ENCODE measurements at regions of chr10 and their contacts with region 1.

Region 1: DNA sequence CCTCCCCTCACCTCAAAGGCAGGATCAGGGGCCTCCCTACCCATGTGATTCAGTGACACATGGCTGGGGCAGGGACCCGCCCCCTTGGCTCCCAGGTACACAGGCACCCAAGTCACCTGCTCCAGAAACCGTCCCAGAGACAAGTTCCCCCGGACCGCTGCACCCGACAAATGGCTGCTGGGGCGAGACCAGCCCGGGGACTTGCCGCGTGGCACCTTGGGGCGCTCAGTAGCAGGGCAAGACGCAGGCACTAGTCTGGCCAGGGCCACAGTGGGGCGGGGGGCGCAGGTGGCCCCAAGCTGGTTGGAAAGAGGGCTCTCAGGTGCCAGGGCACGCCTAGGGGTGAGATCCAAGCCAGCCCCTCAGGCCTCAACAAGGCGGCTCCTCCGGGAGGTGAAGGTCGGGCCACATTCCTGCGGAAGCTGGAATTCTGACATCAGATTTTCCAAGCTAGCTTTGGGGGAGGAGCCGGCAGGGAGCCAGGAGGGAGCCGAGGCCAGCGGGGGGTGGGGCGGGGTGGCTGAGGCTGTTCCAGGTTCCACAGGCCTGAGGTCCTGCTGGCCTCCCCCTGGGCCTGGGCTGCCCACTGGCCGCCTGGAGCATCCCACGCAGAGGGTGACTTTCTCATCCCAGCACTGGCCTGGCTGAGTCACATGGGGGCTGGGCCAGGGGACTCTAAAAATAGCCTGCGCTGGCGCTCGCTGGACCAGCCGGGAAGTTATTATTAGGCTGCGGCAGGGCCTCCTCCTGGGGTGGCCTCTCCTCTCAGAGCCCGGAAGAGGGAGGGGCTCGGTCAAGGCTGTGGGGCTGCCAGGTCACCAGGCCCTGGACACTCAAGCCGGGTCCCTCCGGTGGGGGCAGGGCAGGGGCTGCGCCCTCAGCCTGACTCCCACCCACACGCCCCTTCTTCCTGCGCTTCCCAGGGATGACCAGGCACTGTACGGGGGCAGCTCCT is 20.5 kb upstream of the INPP5A start:
- DNase-seq: peak; percentile 47 to 82
- H3K4me3 ChIP-seq: peak overlapping the region; percentile 45 to 73 (median 57); a peak in 7 of 8 replicates
- H3K27ac ChIP-seq: peak overlapping the region; percentile 66; the same call in 1 of the 2 replicates
- H3K4me1 ChIP-seq: peaks cover 11 to 34% (median 24%) of the 10 kb centered on the region in 4 experiments
- H3K27me3 ChIP-seq: peaks cover 4 to 30% (median 15%) of the 10 kb centered on the region in 4 experiments; a peak in 6 of 7 replicates
- CTCF ChIP-seq: no peak
- EP300 ChIP-seq: peak in 1 of 2 experiments; percentile 39; a peak in 1 of 3 replicates
- POLR2A ChIP-seq: peak in 1 of 2 experiments; percentile 41; a peak in 1 of 3 replicates
- RAD21 ChIP-seq: no peak

Region 2: DNA sequence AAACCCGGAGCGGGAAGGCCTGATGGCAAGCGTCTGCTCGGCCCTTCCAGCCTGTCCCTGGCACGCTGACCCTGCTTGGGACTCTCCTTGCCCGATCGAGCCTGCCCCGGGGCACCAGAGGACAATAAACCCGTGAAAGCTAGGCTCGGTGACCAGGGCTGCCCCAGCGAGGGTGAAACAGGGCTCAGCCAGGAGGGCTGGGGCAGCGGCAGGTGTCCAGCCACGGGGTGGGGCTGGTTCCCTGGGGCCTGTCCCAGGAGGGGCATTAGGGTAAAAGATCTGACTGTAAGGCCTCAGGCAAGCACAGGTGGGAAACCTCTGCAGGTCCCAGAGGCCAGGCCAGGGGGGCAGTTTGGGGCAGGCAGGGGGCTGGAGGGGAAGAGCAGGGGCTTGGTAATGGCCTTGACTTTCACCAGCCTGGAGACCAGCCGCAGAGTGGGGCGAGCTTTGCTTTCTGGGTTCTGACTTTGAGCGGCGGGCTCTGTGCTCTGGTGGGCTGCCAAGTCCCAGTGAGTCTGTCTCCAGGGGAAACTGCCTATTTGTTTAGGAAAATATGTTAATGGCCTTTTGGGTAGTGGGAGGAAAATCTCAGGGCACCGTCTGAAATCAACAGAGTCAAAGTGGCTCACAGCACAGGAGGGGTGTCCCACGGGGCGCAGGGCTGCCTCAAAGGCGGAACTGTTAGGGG is 47.7 kb before region 1 on chr10:
- CTCF ChIA-PET with region 1: interaction called, 4 read pairs
- POLR2A ChIA-PET with region 1: interaction called, 14 read pairs
- DNase-seq: no peak
- H3K4me3 ChIP-seq: no peak overlapping the region
- H3K27ac ChIP-seq: no peak overlapping the region
- H3K4me1 ChIP-seq: peaks cover 0 to 14% (median 8%) of the 10 kb centered on the region in 4 experiments; a peak in 6 of 7 replicates
- H3K27me3 ChIP-seq: no peaks in the 10 kb centered on the region; a peak in 3 of 7 replicates
- CTCF ChIP-seq: no peak
- EP300 ChIP-seq: no peak
- POLR2A ChIP-seq: no peak
- RAD21 ChIP-seq: no peak

Region 3: GRCh38 chr10:132762267-132762666 is 245.2 kb after region 1 on chr10:
- CTCF ChIA-PET with region 1: no interaction called
- POLR2A ChIA-PET with region 1: no interaction called
- DNase-seq: no peak
- H3K4me3 ChIP-seq: no peak overlapping the region
- H3K27ac ChIP-seq: no peak overlapping the region
- H3K4me1 ChIP-seq: no peaks in the 10 kb centered on the region; a peak in 1 of 7 replicates
- H3K27me3 ChIP-seq: no peaks in the 10 kb centered on the region
- CTCF ChIP-seq: no peak
- EP300 ChIP-seq: no peak
- POLR2A ChIP-seq: no peak
- RAD21 ChIP-seq: no peak